Common myeloid progenitor, CD34-positive (primary cell): ENCODE measurements at regions of chr5 and their contacts with region 1.

Region 1: GRCh38 chr5:54469622-54470021 is 14.1 kb downstream of the HSPB3 start:
- DNase-seq: peak in 2 of 3 donors; percentile 6 to 10
- H3K4me3 ChIP-seq: no peak overlapping the region
- H3K27ac ChIP-seq: no peak overlapping the region
- H3K4me1 ChIP-seq: no peaks in the 10 kb centered on the region
- H3K27me3 ChIP-seq: no peaks in the 10 kb centered on the region

Region 2: GRCh38 chr5:53892224-53892623 is 577.4 kb before region 1 on chr5:
- CTCF ChIA-PET with region 1: no interaction called
- POLR2A ChIA-PET with region 1: interaction called, 10 read pairs
- DNase-seq: no peak
- H3K4me3 ChIP-seq: no peak overlapping the region
- H3K27ac ChIP-seq: no peak overlapping the region
- H3K4me1 ChIP-seq: no peaks in the 10 kb centered on the region
- H3K27me3 ChIP-seq: no peaks in the 10 kb centered on the region